Thyroid gland (tissue), 4 donors: ENCODE measurements at regions of chr2 and their contacts with region 1.

Region 1: DNA sequence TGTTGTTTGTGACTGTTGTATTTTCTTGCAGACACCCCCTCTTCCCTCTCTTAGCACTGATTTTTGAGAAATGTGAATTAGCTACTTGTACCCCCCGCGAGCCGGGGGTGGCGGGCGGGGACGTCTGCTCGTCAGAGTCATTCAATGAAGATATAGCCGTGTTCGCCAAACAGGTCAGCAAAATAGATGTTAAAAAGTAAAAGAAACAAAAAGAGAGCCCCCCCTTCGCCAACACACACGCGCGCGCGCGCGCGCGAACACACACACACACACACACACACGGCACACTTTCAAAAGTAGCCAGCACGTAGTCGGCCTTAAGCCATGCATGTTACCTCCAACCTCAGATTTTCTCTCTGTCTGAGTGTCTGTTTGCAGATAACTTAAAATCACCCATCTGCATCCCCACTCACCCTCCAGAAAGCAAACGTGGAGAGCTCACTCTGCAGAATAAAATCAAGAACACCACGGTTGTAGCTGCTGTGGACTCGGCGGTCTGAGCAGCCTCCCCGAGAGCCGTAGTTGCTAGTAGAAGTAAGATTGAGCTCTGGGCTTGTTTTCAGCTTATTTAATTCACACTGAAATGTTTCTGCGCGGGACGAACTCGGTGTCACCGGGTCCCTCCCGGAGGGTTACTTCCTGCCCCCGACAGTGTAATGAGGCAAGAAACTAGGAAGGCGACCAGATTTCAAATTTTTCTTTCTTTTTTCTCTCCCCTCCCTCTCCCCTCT is 5.1 kb downstream of the MEIS1 start:
- DNase-seq: no peak
- H3K4me3 ChIP-seq: peak overlapping the region in 2 of 3 donors; percentile 4 to 18
- H3K27ac ChIP-seq: peak overlapping the region; percentile 21 to 66 (median 22)
- H3K4me1 ChIP-seq: peaks cover 0 to 7% of the 10 kb centered on the region in 2 donors
- H3K27me3 ChIP-seq: peaks cover 6% of the 10 kb centered on the region
- CTCF ChIP-seq: no peak
- POLR2A ChIP-seq: no peak

Region 2: GRCh38 chr2:66574701-66575624 is 135.0 kb after region 1 on chr2:
- intact Hi-C with region 1: loop called (anchors 5 kb)
- DNase-seq: peak; percentile 33 to 45
- H3K4me3 ChIP-seq: peak overlapping the region in 1 of 3 donors; percentile 15
- H3K27ac ChIP-seq: peak overlapping the region in 1 of 3 donors; percentile 53
- H3K4me1 ChIP-seq: peaks cover 10 to 23% of the 10 kb centered on the region in 2 donors
- H3K27me3 ChIP-seq: peaks cover 46% of the 10 kb centered on the region
- CTCF ChIP-seq: peak in 4 of 6 experiments; percentile 12 to 52 (median 30)
- POLR2A ChIP-seq: no peak